Panc1 (cell line): ENCODE measurements at regions of chr12 and their contacts with region 1.

Region 1: GRCh38 chr12:67222302-67222701 is 46.9 kb upstream of the CAND1 start:
- DNase-seq: no peak
- ATAC-seq: no peak; the same call in 1 of the 2 replicates
- H3K4me3 ChIP-seq: no peak overlapping the region
- H3K27ac ChIP-seq: no peak overlapping the region
- H3K4me1 ChIP-seq: no peaks in the 10 kb centered on the region
- H3K27me3 ChIP-seq: peaks cover 6% of the 10 kb centered on the region
- CTCF ChIP-seq: peak; percentile 64

Region 2: DNA sequence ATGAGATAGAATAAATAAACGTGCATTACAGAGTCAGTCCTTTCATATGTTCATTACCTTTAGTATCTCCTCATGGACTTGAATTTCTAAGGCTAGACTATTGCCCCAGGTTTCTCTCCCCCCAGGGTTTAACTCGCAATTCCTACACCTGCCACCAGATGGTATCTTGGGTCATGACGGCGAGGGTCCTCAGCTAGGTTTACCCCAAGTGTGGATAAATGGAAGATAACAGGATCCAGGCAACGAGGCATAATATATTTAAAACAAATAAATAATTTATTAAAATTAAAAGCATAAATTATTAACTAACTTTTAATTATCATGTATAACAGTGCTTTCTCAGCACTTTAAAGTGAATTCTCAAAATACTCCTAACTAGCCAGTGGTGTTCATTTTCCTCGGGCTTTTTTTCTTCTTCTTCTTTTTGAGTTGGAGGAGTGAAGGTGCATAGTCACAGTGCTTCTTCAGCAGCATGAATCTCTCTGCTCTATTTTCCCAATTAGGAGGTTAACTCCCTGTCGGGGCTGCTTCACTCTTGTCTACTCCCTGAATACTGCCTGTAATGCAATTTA is 196.7 kb before region 1 on chr12:
- CTCF ChIA-PET with region 1: no interaction called
- POLR2A ChIA-PET with region 1: no interaction called
- in situ Hi-C with region 1: no loop called
- intact Hi-C with region 1: loop called (anchors 5 kb)
- DNase-seq: peak; percentile 24
- ATAC-seq: no peak
- H3K4me3 ChIP-seq: no peak overlapping the region
- H3K27ac ChIP-seq: no peak overlapping the region
- H3K4me1 ChIP-seq: no peaks in the 10 kb centered on the region
- H3K27me3 ChIP-seq: no peaks in the 10 kb centered on the region; the same call in 1 of the 2 replicates
- CTCF ChIP-seq: peak; percentile 87

Region 3: GRCh38 chr12:67161322-67161918 is 60.9 kb before region 1 on chr12:
- CTCF ChIA-PET with region 1: interaction called, 3 read pairs
- POLR2A ChIA-PET with region 1: no interaction called
- in situ Hi-C with region 1: no loop called
- intact Hi-C with region 1: loop called (anchors 5 kb)
- DNase-seq: peak; percentile 20
- ATAC-seq: no peak
- H3K4me3 ChIP-seq: no peak overlapping the region
- H3K27ac ChIP-seq: no peak overlapping the region
- H3K4me1 ChIP-seq: no peaks in the 10 kb centered on the region
- H3K27me3 ChIP-seq: peaks cover 4% of the 10 kb centered on the region; the same call in 1 of the 2 replicates
- CTCF ChIP-seq: peak; percentile 77